ENCODE measurements at regions of chr3 and their contacts with region 1.

Region 1: DNA sequence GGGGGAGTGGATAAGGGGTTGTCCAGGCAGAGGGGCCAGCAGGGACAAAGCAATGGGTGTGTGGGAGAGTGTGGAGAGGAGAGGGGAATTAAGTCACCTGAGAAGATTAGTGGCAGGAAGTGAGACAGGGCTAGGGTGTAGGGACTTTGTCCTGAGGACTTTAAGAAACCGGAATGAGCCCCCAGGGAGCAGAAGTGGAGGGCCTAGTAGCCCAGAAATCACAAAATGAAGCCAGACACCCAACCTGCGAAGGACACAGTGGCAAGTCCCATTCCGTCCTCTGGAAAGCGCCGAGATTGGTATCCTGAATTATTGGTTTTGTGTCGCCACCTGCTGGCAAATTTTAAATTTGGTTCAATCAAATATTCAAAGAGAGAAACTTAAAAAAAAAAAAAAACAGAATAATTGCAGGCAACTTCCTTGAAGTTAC is 78.0 kb upstream of the SLC25A36 start:
- DNase-seq: no peak
- H3K4me3 ChIP-seq: no peak overlapping the region
- H3K27ac ChIP-seq: no peak overlapping the region
- H3K4me1 ChIP-seq: no peaks in the 10 kb centered on the region
- H3K27me3 ChIP-seq: no peaks in the 10 kb centered on the region
- CTCF ChIP-seq: peak in 1 of 3 experiments; percentile 31

Region 2: DNA sequence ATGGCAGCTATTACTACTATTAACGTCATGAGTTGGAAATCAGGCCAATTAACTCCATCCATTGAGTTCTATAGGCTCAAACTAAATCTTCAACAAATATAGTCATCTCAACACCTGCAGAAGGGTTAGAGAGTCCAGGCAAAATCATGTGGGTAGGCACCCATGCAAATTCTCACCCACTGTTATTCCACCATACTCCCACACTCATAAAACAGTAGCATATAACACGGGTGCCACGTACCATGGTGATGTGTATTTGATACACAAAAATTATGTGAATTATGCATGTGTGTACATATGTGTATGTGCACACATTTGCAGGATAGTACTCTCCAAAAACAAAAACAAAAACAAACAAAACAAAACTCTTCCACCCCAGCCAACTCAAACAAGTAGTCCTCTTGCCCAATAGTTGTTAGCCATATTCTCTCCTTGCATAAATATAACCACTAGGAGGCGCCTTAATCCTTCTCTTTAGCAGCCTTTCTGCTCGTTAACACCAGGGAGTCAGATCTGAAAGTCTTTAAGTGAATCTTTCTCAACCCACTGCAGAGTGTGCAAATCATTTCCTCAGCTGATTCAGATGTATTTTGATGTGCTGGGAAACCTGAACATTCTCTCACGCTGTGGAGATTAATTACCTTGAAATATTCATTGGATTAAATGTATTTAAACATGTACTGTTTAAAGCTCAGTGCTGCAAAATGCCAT is 1436.2 kb before region 1 on chr3:
- intact Hi-C with region 1: loop called (anchors 10 kb)
- DNase-seq: no peak
- H3K4me3 ChIP-seq: no peak overlapping the region
- H3K27ac ChIP-seq: no peak overlapping the region
- H3K4me1 ChIP-seq: no peaks in the 10 kb centered on the region
- H3K27me3 ChIP-seq: no peaks in the 10 kb centered on the region
- CTCF ChIP-seq: peak; percentile 54 to 81 (median 66)

Region 3: GRCh38 chr3:140956058-140956835 is 92.7 kb after region 1 on chr3:
- intact Hi-C with region 1: no loop called
- DNase-seq: no peak
- H3K4me3 ChIP-seq: no peak overlapping the region
- H3K27ac ChIP-seq: no peak overlapping the region
- H3K4me1 ChIP-seq: peaks cover 0 to 2% of the 10 kb centered on the region in 2 donors
- H3K27me3 ChIP-seq: no peaks in the 10 kb centered on the region
- CTCF ChIP-seq: no peak

Region 4: DNA sequence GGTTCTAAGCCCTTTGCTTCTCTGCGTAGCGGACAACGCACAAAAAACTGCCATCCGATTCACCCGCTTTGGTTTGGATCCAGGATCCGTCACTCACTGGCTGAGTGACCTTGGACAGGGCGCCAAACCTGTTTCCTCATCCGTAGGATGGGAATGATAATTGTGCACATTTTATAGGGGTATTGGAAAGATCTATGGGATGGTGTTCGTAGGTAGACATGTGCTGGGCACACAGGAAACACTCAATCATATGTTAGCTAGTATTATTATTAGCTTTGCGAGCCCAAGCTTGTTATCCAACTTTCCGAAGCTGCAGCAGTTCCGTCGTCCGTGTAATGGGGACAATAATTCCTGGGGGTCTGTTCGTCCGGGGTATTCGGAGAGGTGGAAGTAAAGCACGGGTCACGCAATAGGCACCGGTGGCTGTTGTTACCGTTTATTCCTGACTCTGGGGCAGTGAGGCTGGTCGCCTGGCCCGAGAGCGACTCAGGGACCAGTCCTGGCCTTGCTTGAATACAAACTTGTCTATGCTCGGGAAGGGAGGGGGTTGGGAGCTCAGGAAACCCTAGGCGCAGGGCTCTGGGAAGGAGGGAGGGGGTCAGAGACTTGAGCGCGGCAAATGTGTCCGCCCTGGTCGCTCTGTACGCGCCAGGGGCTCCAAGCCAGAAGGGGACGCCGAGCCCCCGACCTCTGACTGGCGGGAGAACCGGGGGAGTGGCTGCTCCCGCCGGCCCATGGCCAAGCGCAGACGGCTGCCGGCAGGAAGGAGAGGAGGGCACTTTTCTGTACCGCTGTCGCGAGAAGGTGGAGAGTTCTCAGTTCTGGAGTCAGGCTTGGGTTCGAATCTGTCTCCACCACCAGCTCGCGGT is 188.8 kb after region 1 on chr3:
- intact Hi-C with region 1: no loop called
- DNase-seq: no peak
- H3K4me3 ChIP-seq: peak overlapping the region; percentile 63 to 85
- H3K27ac ChIP-seq: peak overlapping the region in 1 of 2 donors; percentile 61
- H3K4me1 ChIP-seq: peaks cover 0 to 4% of the 10 kb centered on the region in 2 donors
- H3K27me3 ChIP-seq: no peaks in the 10 kb centered on the region
- CTCF ChIP-seq: no peak

Region 5: GRCh38 chr3:141426404-141427034 is 562.9 kb after region 1 on chr3:
- intact Hi-C with region 1: no loop called
- DNase-seq: peak in 1 of 2 donors; percentile 80
- H3K4me3 ChIP-seq: no peak overlapping the region
- H3K27ac ChIP-seq: peak overlapping the region; percentile 72 to 80
- H3K4me1 ChIP-seq: peaks cover 12 to 60% of the 10 kb centered on the region in 2 donors
- H3K27me3 ChIP-seq: no peaks in the 10 kb centered on the region
- CTCF ChIP-seq: no peak